Posterior vena cava (tissue), 2 donors: ENCODE measurements at regions of chr2 and their contacts with region 1.

Region 1: GRCh38 chr2:136204971-136205370 is 87.0 kb upstream of the CXCR4 start:
- DNase-seq: no peak

Region 2: DNA sequence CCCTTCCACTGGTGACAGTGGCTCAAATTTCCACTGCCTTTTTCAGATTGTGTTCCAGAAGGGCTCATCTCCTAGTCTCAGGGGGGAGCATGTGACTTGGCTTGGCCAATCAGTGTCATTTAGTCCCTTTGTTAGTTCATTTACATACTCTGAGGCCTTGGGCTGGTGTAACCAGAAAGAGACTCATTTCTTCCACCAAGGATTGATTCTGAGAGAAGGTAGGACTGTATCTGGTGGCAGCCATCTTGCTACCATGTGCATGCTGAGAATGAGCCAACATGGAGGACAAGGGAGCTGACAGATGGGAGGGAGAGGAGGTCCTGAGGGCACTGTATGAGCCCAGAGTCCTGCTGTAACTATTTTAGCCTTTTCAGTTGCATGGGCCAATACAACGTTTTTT is 752.1 kb after region 1 on chr2:
- intact Hi-C with region 1: loop called in 1 of 2 experiments (anchors 5 kb)
- DNase-seq: no peak